CD4-positive, alpha-beta memory T cell (primary cell): ENCODE measurements at regions of chr3 and their contacts with region 1.

Region 1: GRCh38 chr3:57112206-57112605 is 51.7 kb downstream of the SPATA12 start:
- DNase-seq: no peak
- H3K4me3 ChIP-seq: no peak overlapping the region
- H3K4me3 Mint-ChIP-seq: peak overlapping the region in 1 of 8 donors; percentile 17
- H3K27ac ChIP-seq: no peak overlapping the region
- H3K27ac Mint-ChIP-seq: no peak overlapping the region
- H3K4me1 ChIP-seq: no peaks in the 10 kb centered on the region
- H3K4me1 Mint-ChIP-seq: peaks cover 0 to 4% (median 2%) of the 10 kb centered on the region in 4 donors
- H3K27me3 ChIP-seq: no peaks in the 10 kb centered on the region
- H3K27me3 Mint-ChIP-seq: peaks cover 1 to 6% of the 10 kb centered on the region in 2 donors

Region 2: GRCh38 chr3:57068437-57069089 is 43.6 kb before region 1 on chr3:
- CTCF ChIA-PET with region 1: no interaction called
- POLR2A ChIA-PET with region 1: no interaction called
- intact Hi-C with region 1: no loop called
- DNase-seq: no peak
- H3K4me3 ChIP-seq: no peak overlapping the region
- H3K4me3 Mint-ChIP-seq: no peak overlapping the region
- H3K27ac ChIP-seq: no peak overlapping the region
- H3K27ac Mint-ChIP-seq: no peak overlapping the region
- H3K4me1 ChIP-seq: no peaks in the 10 kb centered on the region
- H3K4me1 Mint-ChIP-seq: no peaks in the 10 kb centered on the region
- H3K27me3 ChIP-seq: no peaks in the 10 kb centered on the region
- H3K27me3 Mint-ChIP-seq: peaks cover 18 to 19% of the 10 kb centered on the region in 2 donors

Region 3: GRCh38 chr3:57100046-57100695 is 12.0 kb before region 1 on chr3:
- CTCF ChIA-PET with region 1: interaction called, 15 read pairs
- POLR2A ChIA-PET with region 1: no interaction called
- intact Hi-C with region 1: no loop called
- DNase-seq: peak in 4 of 5 donors; percentile 42 to 56 (median 42)
- H3K4me3 ChIP-seq: no peak overlapping the region
- H3K4me3 Mint-ChIP-seq: no peak overlapping the region
- H3K27ac ChIP-seq: no peak overlapping the region
- H3K27ac Mint-ChIP-seq: peak overlapping the region in 1 of 7 donors; percentile 64
- H3K4me1 ChIP-seq: no peaks in the 10 kb centered on the region
- H3K4me1 Mint-ChIP-seq: peaks cover 0 to 6% (median 3%) of the 10 kb centered on the region in 4 donors
- H3K27me3 ChIP-seq: no peaks in the 10 kb centered on the region
- H3K27me3 Mint-ChIP-seq: peaks cover 0 to 1% of the 10 kb centered on the region in 2 donors

Region 4: GRCh38 chr3:57755668-57756527 is 643.7 kb after region 1 on chr3 and contains the start of gene SLMAP:
- CTCF ChIA-PET with region 1: no interaction called
- POLR2A ChIA-PET with region 1: no interaction called
- intact Hi-C with region 1: no loop called
- DNase-seq: peak; percentile 94 to 98 (median 95)
- H3K4me3 ChIP-seq: peak within 1 kb of the TSS; percentile 40 to 81
- H3K4me3 Mint-ChIP-seq: peak within 1 kb of the TSS; percentile 96 to 99 (median 98)
- H3K27ac ChIP-seq: peak within 1 kb of the TSS; percentile 77
- H3K27ac Mint-ChIP-seq: peak within 1 kb of the TSS; percentile 86 to 98 (median 96)
- H3K4me1 ChIP-seq: peaks cover 39% of the 10 kb centered on the region
- H3K4me1 Mint-ChIP-seq: peaks cover 19 to 49% (median 35%) of the 10 kb centered on the region in 4 donors
- H3K27me3 ChIP-seq: no peaks in the 10 kb centered on the region
- H3K27me3 Mint-ChIP-seq: no peaks in the 10 kb centered on the region
- total RNA-seq, gene SLMAP: 58.6 to 69.0 TPM

Region 5: DNA sequence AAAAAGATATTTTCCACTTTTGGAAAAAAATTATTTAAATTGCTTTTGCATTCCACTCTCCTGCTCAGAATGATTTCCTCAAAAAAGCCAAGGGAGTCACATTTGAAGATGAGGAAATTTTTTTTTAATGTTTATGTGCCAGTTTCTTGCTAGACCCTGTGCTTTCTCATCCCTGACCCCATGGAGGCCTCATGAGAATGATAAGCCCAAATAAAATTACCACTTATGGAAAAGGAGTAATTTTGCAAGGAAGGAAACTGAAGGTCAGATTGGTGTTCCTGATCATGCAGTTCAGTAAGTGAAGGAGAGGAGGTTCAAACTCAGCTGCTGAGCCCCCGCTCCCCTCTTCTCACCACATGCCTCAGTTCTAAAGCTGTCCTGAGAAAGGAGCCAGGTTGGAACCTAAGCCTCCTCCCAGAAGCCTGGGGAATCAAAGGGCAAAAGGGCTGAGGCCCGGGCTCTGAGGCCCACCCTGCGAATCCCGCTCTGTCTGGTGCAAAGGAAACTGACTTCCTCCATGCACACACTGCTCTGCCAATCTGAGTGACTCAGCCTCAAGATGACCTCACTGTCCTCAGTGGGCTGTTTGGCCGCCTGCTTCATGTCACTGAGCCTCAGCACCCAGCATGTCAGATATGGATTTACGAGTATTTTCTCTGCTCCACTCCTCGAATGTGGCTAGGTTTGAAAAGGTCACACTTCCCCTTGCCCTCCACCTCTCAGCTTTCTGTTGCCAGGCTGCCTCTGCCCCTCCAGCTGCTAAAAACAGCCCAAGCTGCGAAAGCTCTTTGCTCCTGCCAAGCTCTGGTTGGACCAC is 839.1 kb after region 1 on chr3:
- CTCF ChIA-PET with region 1: no interaction called
- POLR2A ChIA-PET with region 1: no interaction called
- intact Hi-C with region 1: no loop called
- DNase-seq: no peak
- H3K4me3 ChIP-seq: no peak overlapping the region
- H3K4me3 Mint-ChIP-seq: no peak overlapping the region
- H3K27ac ChIP-seq: no peak overlapping the region
- H3K27ac Mint-ChIP-seq: no peak overlapping the region
- H3K4me1 ChIP-seq: no peaks in the 10 kb centered on the region
- H3K4me1 Mint-ChIP-seq: no peaks in the 10 kb centered on the region
- H3K27me3 ChIP-seq: no peaks in the 10 kb centered on the region
- H3K27me3 Mint-ChIP-seq: peaks cover 0 to 2% of the 10 kb centered on the region in 2 donors